GM12878 (cell line): ENCODE measurements at regions of chrX and their contacts with region 1.

Region 1: GRCh38 chrX:120749141-120749846 is 119.4 kb upstream of the C1GALT1C1 start:
- DNase-seq: no peak
- ATAC-seq: peak; percentile 73
- H3K4me3 ChIP-seq: no peak overlapping the region
- H3K27ac ChIP-seq: no peak overlapping the region; the same call in 1 of the 2 replicates
- H3K4me1 ChIP-seq: peaks cover 16% of the 10 kb centered on the region
- H3K27me3 ChIP-seq: no peaks in the 10 kb centered on the region
- CTCF ChIP-seq: no peak
- EP300 ChIP-seq: no peak
- POLR2A ChIP-seq: no peak
- RAD21 ChIP-seq: no peak

Region 2: GRCh38 chrX:120671963-120672362 is 77.3 kb before region 1 on chrX:
- CTCF ChIA-PET with region 1: no interaction called
- POLR2A ChIA-PET with region 1: no interaction called
- RAD21 ChIA-PET with region 1: no interaction called
- SMC1A ChIA-PET with region 1: no interaction called
- in situ Hi-C with region 1: no loop called
- intact Hi-C with region 1: no loop called
- DNase-seq: no peak
- ATAC-seq: no peak
- H3K4me3 ChIP-seq: no peak overlapping the region
- H3K27ac ChIP-seq: no peak overlapping the region
- H3K4me1 ChIP-seq: no peaks in the 10 kb centered on the region
- H3K27me3 ChIP-seq: no peaks in the 10 kb centered on the region
- CTCF ChIP-seq: no peak
- EP300 ChIP-seq: no peak
- POLR2A ChIP-seq: no peak
- RAD21 ChIP-seq: no peak

Region 3: GRCh38 chrX:120690344-120690743 is 59.0 kb before region 1 on chrX:
- CTCF ChIA-PET with region 1: no interaction called
- POLR2A ChIA-PET with region 1: no interaction called
- RAD21 ChIA-PET with region 1: no interaction called
- SMC1A ChIA-PET with region 1: no interaction called
- in situ Hi-C with region 1: no loop called
- intact Hi-C with region 1: no loop called
- DNase-seq: no peak
- ATAC-seq: no peak
- H3K4me3 ChIP-seq: no peak overlapping the region
- H3K27ac ChIP-seq: no peak overlapping the region
- H3K4me1 ChIP-seq: no peaks in the 10 kb centered on the region
- H3K27me3 ChIP-seq: no peaks in the 10 kb centered on the region
- CTCF ChIP-seq: no peak
- EP300 ChIP-seq: no peak
- POLR2A ChIP-seq: no peak
- RAD21 ChIP-seq: no peak

Region 4: DNA sequence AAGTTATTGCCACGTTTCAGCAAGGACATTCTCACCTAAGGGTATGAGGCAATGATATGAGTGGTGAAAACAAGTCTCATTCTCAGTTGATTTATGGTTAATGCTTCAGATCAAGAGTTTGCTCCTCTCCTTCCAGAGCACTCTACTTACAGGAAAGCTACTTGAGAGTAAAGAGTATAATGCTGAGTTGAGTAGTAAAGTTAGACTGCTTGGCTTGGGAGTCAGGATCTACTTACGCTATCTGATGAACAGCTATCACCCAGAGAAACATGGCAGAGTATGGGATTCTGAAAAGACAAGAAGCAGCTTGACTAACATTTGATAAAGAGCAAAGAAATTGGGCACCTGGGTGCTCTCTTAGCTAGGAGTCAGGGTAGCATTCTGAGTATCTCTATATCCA is 509.9 kb after region 1 on chrX:
- CTCF ChIA-PET with region 1: no interaction called
- POLR2A ChIA-PET with region 1: interaction called, 11 read pairs
- RAD21 ChIA-PET with region 1: no interaction called
- SMC1A ChIA-PET with region 1: no interaction called
- in situ Hi-C with region 1: no loop called
- intact Hi-C with region 1: no loop called
- DNase-seq: no peak
- ATAC-seq: no peak
- H3K4me3 ChIP-seq: no peak overlapping the region
- H3K27ac ChIP-seq: no peak overlapping the region
- H3K4me1 ChIP-seq: no peaks in the 10 kb centered on the region
- H3K27me3 ChIP-seq: no peaks in the 10 kb centered on the region
- CTCF ChIP-seq: no peak
- EP300 ChIP-seq: no peak
- POLR2A ChIP-seq: no peak
- RAD21 ChIP-seq: no peak